ENCODE measurements at regions of chr14 and their contacts with region 1.

Region 1: DNA sequence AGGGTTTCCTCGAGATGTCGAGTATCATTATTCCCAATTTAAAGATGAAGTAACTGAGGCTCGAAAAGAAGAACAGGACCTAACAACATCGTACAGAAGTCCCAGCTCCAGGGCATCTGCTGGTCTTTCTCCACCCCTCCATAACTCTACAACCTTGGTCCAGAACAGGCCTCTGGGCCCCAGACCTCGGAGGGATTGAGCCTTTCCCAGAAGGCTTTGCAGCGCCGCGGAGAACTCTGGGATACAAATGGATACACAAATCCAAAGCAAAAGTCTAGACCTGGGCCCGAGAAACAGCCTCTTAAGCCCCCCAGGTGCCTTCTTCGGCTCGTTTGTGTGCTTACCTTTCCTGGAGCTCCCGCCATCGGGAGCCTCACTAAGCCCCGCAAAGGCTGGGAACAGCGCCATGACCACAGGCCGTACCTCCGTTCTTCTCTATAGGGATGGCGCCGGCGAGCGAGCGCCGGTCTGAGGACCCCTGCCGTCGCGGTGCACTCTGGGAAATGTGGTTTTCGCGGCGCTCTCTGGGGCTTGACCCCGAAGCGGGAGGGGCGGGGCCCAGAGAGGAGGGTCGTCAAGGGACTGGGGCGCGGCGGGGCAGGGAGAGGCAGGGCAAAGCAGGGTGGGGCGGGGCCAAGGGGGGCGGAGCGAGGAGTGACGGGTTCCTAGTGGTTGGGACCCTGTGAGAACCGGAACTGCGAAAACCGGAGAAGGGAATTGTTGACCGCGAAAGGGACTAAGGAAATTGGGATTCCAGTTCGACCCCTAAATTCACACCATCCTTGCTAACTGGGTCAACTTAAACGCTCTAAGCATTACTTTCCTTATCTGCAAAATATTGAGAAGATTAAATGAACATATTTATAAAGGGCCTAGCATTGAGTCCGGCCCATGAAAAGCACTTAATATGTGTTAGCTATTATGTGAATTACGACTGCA is at the start of gene NRDE2:
- DNase-seq: peak; percentile 78
- ATAC-seq: peak; percentile 97
- H3K4me3 ChIP-seq: peak within 1 kb of the TSS; percentile 76
- H3K27ac ChIP-seq: peak within 1 kb of the TSS; percentile 79
- H3K4me1 ChIP-seq: no peaks in the 10 kb centered on the region
- H3K27me3 ChIP-seq: no peaks in the 10 kb centered on the region
- CTCF ChIP-seq: no peak
- EP300 ChIP-seq: no peak
- POLR2A ChIP-seq: peak; percentile 87
- RAD21 ChIP-seq: no peak
- polyA plus RNA-seq, gene NRDE2: 8.3 to 8.4 TPM

Region 2: GRCh38 chr14:90132821-90133570 is 198.8 kb before region 1 on chr14:
- CTCF ChIA-PET with region 1: no interaction called
- POLR2A ChIA-PET with region 1: no interaction called
- RAD21 ChIA-PET with region 1: no interaction called
- SMC1A ChIA-PET with region 1: no interaction called
- in situ Hi-C with region 1: no loop called
- intact Hi-C with region 1: no loop called
- DNase-seq: no peak
- ATAC-seq: no peak
- H3K4me3 ChIP-seq: no peak overlapping the region
- H3K27ac ChIP-seq: no peak overlapping the region
- H3K4me1 ChIP-seq: no peaks in the 10 kb centered on the region
- H3K27me3 ChIP-seq: no peaks in the 10 kb centered on the region
- CTCF ChIP-seq: no peak
- EP300 ChIP-seq: no peak
- POLR2A ChIP-seq: no peak
- RAD21 ChIP-seq: no peak

Region 3: DNA sequence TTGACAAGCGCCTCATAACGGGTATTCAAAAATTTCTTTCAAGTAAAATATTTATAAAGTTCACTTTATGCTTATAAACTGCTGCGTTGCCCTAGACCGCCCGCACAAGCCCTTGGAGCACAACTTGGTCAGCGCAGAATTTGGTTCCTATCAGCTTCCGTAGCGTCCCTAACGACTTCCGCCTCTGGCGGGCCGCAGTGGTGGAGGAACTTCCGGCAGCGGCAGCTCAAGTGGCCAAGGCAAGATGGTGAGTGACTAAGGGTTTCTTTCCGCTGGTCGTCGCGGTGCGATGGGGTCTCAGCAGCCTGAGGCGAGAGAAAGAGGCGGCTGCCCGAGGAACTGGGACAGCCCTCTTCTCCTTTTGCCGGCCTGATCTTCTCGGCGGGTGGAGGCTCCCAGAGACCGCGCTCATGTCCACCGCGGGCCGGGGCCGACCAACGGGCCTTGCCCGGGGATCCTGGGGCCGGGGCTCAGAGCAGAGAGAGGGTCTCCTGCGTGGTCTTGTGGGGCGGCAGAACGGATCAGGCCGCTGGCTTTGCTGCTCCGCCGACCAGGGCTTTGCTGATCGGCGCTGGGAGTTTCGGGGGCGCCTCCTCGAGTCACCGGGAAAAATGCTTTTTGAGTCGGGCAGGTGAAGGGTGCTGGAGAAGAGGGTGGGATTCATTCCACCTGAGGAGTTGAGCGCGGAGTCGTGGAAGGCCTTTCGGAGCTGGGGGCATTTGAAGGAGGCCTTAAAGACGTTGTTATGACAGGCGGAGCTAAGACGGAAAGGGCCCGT is 75.2 kb before region 1 on chr14 and contains the start of gene PSMC1:
- CTCF ChIA-PET with region 1: no interaction called
- POLR2A ChIA-PET with region 1: no interaction called
- RAD21 ChIA-PET with region 1: no interaction called
- SMC1A ChIA-PET with region 1: no interaction called
- in situ Hi-C with region 1: no loop called
- intact Hi-C with region 1: loop called (anchors 2 kb)
- DNase-seq: peak; percentile 68
- ATAC-seq: peak; percentile 99
- H3K4me3 ChIP-seq: peak within 1 kb of the TSS; percentile 87
- H3K27ac ChIP-seq: peak within 1 kb of the TSS; percentile 87
- H3K4me1 ChIP-seq: no peaks in the 10 kb centered on the region
- H3K27me3 ChIP-seq: no peaks in the 10 kb centered on the region
- CTCF ChIP-seq: no peak
- EP300 ChIP-seq: no peak
- POLR2A ChIP-seq: peak; percentile 92
- RAD21 ChIP-seq: no peak
- polyA plus RNA-seq, gene PSMC1: 194 to 255 TPM

Region 4: GRCh38 chr14:90383075-90383730 is 51.4 kb after region 1 on chr14:
- CTCF ChIA-PET with region 1: interaction called, 3 read pairs
- POLR2A ChIA-PET with region 1: no interaction called
- RAD21 ChIA-PET with region 1: no interaction called
- SMC1A ChIA-PET with region 1: interaction called, 3 read pairs
- in situ Hi-C with region 1: no loop called
- intact Hi-C with region 1: loop called (anchors 1 kb)
- DNase-seq: peak; percentile 98
- ATAC-seq: peak; percentile 96
- H3K4me3 ChIP-seq: peak overlapping the region; percentile 82
- H3K27ac ChIP-seq: peak overlapping the region; percentile 98
- H3K4me1 ChIP-seq: peaks cover 7% of the 10 kb centered on the region
- H3K27me3 ChIP-seq: no peaks in the 10 kb centered on the region
- CTCF ChIP-seq: no peak
- EP300 ChIP-seq: no peak
- POLR2A ChIP-seq: peak; percentile 91
- RAD21 ChIP-seq: no peak